HCT116 (cell line): ENCODE measurements at regions of chr17 and their contacts with region 1.

Region 1: GRCh38 chr17:41648411-41649195 is 24.2 kb upstream of the KRT17 start:
- DNase-seq: peak; percentile 77
- ATAC-seq: peak; percentile 81
- H3K4me3 ChIP-seq: peak overlapping the region; percentile 38 to 53
- H3K27ac ChIP-seq: peak overlapping the region; percentile 41
- H3K4me1 ChIP-seq: peaks cover 30 to 77% of the 10 kb centered on the region in 2 experiments
- H3K27me3 ChIP-seq: no peaks in the 10 kb centered on the region
- CTCF ChIP-seq: peak; percentile 90 to 98 (median 95)
- POLR2A ChIP-seq: no peak
- RAD21 ChIP-seq: peak; percentile 92

Region 2: DNA sequence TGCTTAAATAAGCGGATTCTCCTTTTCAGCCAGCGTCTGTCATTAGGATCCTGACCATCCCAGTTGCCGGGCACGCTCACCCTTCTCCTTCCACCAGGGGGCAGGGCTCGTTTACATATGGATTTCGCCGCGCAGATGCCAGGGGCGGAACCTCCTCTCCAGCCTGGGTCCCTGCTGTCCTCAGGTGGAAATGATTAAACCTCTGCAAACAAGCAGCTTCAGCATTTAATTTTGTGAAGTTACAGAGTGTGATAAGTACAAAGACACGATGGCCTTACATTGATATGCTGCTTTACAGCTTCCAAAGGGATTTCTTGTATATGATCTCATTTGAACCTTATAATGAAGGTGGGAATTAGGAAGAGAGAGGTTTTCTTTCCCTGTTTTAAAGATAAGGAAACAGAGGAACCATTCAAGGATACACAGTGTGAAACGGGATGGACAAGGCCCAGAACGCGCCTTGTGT is 845.0 kb before region 1 on chr17:
- CTCF ChIA-PET with region 1: no interaction called
- POLR2A ChIA-PET with region 1: no interaction called
- RAD21 ChIA-PET with region 1: no interaction called
- intact Hi-C with region 1: loop called (anchors 5 kb)
- DNase-seq: peak; percentile 74
- ATAC-seq: peak; percentile 99
- H3K4me3 ChIP-seq: no peak overlapping the region
- H3K27ac ChIP-seq: no peak overlapping the region
- H3K4me1 ChIP-seq: peaks cover 3 to 9% of the 10 kb centered on the region in 2 experiments; a peak in 3 of 4 replicates
- H3K27me3 ChIP-seq: no peaks in the 10 kb centered on the region
- CTCF ChIP-seq: peak; percentile 82 to 96 (median 88)
- POLR2A ChIP-seq: no peak
- RAD21 ChIP-seq: peak; percentile 98

Region 3: DNA sequence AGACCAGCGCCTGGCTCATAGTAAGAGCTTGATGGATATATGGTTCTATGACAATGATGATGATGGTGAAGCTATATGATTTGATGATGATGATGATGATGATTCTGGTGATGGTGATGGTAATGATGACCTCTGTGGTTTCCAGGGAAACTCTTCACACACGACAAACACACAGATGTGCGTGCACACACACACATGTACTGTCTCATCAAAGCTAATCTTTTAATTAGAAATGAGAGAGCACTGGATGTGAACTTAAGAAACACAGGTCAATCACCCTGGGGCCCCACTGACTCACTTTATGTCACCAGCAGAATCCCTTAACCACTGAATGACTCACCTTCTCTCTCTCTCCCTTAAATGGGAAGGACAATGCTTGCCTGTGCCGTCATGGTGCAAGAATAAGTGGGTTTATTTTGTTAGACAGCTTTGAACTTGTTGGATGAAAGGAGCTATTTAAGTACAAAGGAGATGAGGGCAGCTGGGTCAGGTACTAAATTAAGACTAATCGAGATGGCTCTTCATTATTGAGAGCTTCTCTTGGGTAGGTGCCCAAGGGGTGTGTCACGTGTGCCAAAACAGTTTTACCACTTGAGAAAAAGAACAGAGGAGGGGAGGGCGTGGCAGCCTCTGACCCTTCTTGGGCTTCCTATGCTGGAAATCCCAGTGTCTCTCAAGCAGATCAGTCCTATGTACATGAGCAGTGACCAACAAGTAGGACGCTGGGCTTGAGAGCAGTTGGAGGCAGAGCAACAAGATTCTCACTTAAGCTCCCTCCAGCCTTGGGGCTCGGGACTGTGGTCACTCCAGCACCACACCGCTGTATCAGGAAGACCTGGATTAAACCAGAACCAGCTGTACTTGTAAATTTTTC is 244.6 kb before region 1 on chr17:
- CTCF ChIA-PET with region 1: interaction called, 4 read pairs
- POLR2A ChIA-PET with region 1: no interaction called
- RAD21 ChIA-PET with region 1: no interaction called
- intact Hi-C with region 1: loop called (anchors 10 kb)
- DNase-seq: peak; percentile 99
- ATAC-seq: peak; percentile 84
- H3K4me3 ChIP-seq: no peak overlapping the region
- H3K27ac ChIP-seq: peak overlapping the region; percentile 78
- H3K4me1 ChIP-seq: peaks cover 43 to 73% of the 10 kb centered on the region in 2 experiments
- H3K27me3 ChIP-seq: no peaks in the 10 kb centered on the region
- CTCF ChIP-seq: no peak
- POLR2A ChIP-seq: no peak
- RAD21 ChIP-seq: peak; percentile 56

Region 4: GRCh38 chr17:41579484-41580243 is 68.9 kb before region 1 on chr17:
- CTCF ChIA-PET with region 1: interaction called, 19 read pairs
- POLR2A ChIA-PET with region 1: interaction called, 9 read pairs
- RAD21 ChIA-PET with region 1: interaction called, 4 to 6 read pairs
- intact Hi-C with region 1: loop called (anchors 1 kb)
- DNase-seq: peak; percentile 82
- ATAC-seq: peak; percentile 95
- H3K4me3 ChIP-seq: peak overlapping the region; percentile 17 to 47
- H3K27ac ChIP-seq: peak overlapping the region; percentile 37
- H3K4me1 ChIP-seq: peaks cover 22 to 49% of the 10 kb centered on the region in 2 experiments
- H3K27me3 ChIP-seq: no peaks in the 10 kb centered on the region
- CTCF ChIP-seq: peak; percentile 84 to 94 (median 86)
- POLR2A ChIP-seq: peak; percentile 48
- RAD21 ChIP-seq: peak; percentile 89

Region 5: DNA sequence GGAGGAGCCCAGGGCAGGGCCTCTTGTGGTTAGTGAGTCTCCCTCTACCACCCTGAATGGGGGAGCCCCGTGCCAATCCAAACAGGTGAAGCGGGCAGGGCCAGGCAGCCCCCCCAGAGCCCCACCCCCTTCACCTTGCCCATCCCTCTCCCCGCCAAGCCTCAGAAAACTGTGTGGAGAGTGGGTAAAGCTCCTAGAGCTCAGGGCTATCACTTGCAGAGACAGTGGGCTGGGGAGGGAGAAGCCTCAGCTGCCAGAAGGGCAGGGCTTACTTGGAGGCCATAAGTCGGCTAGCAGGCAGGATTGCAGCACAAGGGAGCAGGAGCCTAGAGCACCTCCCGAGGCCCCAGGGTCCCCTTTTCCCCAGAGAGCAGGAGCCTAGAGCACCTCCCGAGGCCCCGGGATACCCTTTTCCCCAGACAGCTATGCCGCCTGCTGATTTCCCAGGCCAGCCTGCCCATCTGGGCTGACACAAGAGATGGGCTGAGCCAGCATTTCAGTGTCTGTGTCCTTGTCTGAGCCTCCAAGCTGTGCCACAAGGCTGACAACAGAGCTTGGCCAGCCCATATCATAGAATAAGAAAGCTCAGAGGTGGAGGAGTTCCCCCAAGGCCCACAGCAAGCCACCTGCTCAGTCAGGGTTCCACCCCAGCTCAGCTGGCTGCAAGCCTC is 55.2 kb before region 1 on chr17:
- CTCF ChIA-PET with region 1: interaction called, 11 read pairs
- POLR2A ChIA-PET with region 1: no interaction called
- RAD21 ChIA-PET with region 1: no interaction called
- intact Hi-C with region 1: loop called (anchors 5 kb)
- DNase-seq: no peak
- ATAC-seq: no peak
- H3K4me3 ChIP-seq: no peak overlapping the region
- H3K27ac ChIP-seq: no peak overlapping the region
- H3K4me1 ChIP-seq: peaks cover 0 to 5% of the 10 kb centered on the region in 2 experiments; a peak in 1 of 4 replicates
- H3K27me3 ChIP-seq: no peaks in the 10 kb centered on the region
- CTCF ChIP-seq: no peak
- POLR2A ChIP-seq: no peak
- RAD21 ChIP-seq: no peak

Region 6: DNA sequence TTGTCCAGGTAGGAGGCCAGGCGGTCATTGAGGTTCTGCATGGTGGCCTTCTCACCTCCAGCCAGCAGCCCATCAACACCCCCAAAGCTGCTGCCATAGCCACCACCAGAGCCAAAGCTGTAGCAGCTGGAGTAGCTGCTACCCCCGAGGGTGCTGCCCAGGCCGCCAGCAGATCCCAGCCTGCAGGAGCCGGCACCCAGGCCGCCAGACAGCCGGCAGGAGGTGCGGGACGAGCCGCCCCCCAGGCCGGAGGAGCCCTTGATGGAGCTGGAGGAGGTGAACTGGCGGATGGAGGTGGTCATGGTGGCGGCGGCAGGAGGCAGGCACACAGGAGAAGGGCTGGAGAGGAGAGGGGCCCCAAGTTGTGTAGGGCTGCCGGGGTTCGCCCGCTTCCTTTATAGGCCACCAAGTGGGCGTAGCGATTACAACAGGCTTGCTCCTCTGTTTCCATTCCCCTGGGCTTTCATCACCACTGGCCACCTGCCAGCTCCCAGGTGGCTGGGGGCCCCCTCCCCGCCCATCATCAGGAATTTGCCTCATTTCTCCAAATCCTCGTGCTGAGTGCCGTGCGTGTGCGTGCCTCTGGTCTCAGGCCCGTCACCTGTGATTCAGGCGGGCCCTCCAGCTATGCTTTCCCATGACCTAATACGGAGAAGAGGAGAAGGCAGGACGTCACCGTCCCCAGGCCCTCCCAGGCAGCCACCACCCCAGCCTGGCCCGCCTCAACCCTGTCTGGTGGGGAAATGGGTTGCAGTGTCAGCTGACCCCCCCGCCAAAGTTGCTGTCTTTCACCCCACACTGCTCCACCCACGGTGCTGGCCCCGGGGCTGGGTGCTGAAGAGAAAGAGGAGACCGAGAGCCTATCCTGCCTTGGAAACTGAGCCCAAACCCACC is 24.1 kb before region 1 on chr17 and contains the start of gene KRT17:
- CTCF ChIA-PET with region 1: no interaction called
- POLR2A ChIA-PET with region 1: no interaction called
- RAD21 ChIA-PET with region 1: no interaction called
- intact Hi-C with region 1: no loop called
- DNase-seq: no peak
- ATAC-seq: no peak
- H3K4me3 ChIP-seq: no peak within 1 kb of the TSS
- H3K27ac ChIP-seq: no peak within 1 kb of the TSS
- H3K4me1 ChIP-seq: no peaks in the 10 kb centered on the region
- H3K27me3 ChIP-seq: no peaks in the 10 kb centered on the region
- CTCF ChIP-seq: no peak
- POLR2A ChIP-seq: no peak
- RAD21 ChIP-seq: no peak
- total RNA-seq, gene KRT17: not detected

Region 7: DNA sequence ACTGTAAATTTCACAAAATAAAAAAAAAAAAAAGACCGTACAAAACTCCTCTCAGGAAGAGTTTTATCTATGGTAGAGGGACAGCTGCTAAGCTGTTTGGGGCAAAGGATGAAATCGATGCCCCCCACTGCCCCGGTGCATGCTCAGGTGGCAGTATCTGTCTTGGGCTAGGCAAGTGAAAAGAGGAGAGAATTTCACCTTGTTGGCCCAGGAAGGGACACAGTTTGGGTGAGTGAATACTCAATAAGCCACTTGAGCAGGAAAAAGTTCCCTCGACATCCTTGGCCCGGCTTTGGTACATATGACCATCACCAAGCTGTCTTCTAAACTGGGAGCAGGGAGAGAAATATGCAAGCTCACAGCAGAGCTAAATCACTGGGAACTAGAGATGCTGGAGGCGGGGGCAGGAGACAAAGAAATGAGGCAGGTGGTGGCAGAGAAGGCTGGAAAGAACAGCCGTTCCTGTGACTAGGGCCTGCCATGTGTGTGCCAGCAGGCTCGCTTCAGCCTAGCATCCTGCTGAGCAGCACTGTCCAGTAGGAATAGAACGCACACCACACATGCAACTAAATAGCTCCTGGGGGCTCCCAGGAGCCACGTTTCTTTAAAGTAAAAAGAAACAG is 31.9 kb after region 1 on chr17:
- CTCF ChIA-PET with region 1: no interaction called
- POLR2A ChIA-PET with region 1: no interaction called
- RAD21 ChIA-PET with region 1: no interaction called
- intact Hi-C with region 1: no loop called
- DNase-seq: no peak
- ATAC-seq: no peak
- H3K4me3 ChIP-seq: no peak overlapping the region
- H3K27ac ChIP-seq: no peak overlapping the region
- H3K4me1 ChIP-seq: peaks cover 8 to 18% of the 10 kb centered on the region in 2 experiments
- H3K27me3 ChIP-seq: no peaks in the 10 kb centered on the region
- CTCF ChIP-seq: no peak
- POLR2A ChIP-seq: no peak
- RAD21 ChIP-seq: no peak

Region 8: GRCh38 chr17:41750862-41751261 is 102.3 kb after region 1 on chr17:
- CTCF ChIA-PET with region 1: no interaction called
- POLR2A ChIA-PET with region 1: no interaction called
- RAD21 ChIA-PET with region 1: no interaction called
- intact Hi-C with region 1: no loop called
- DNase-seq: no peak
- ATAC-seq: no peak
- H3K4me3 ChIP-seq: no peak overlapping the region
- H3K27ac ChIP-seq: no peak overlapping the region
- H3K4me1 ChIP-seq: no peaks in the 10 kb centered on the region
- H3K27me3 ChIP-seq: no peaks in the 10 kb centered on the region
- CTCF ChIP-seq: no peak
- POLR2A ChIP-seq: no peak
- RAD21 ChIP-seq: no peak